Thyroid gland (tissue), 4 donors: ENCODE measurements at regions of chr16 and their contacts with region 1.

Region 1: GRCh38 chr16:87778830-87779579 is 13.2 kb upstream of the KLHDC4 start:
- DNase-seq: peak; percentile 80 to 81
- H3K4me3 ChIP-seq: no peak overlapping the region
- H3K27ac ChIP-seq: no peak overlapping the region
- H3K4me1 ChIP-seq: peaks cover 0 to 8% of the 10 kb centered on the region in 2 donors
- H3K27me3 ChIP-seq: no peaks in the 10 kb centered on the region
- CTCF ChIP-seq: peak; percentile 90 to 99 (median 97)
- POLR2A ChIP-seq: no peak

Region 2: GRCh38 chr16:87548046-87548445 is 231.0 kb before region 1 on chr16:
- intact Hi-C with region 1: loop called (anchors 5 kb)
- DNase-seq: no peak
- H3K4me3 ChIP-seq: no peak overlapping the region
- H3K27ac ChIP-seq: no peak overlapping the region
- H3K4me1 ChIP-seq: no peaks in the 10 kb centered on the region
- H3K27me3 ChIP-seq: no peaks in the 10 kb centered on the region
- CTCF ChIP-seq: no peak
- POLR2A ChIP-seq: no peak

Region 3: DNA sequence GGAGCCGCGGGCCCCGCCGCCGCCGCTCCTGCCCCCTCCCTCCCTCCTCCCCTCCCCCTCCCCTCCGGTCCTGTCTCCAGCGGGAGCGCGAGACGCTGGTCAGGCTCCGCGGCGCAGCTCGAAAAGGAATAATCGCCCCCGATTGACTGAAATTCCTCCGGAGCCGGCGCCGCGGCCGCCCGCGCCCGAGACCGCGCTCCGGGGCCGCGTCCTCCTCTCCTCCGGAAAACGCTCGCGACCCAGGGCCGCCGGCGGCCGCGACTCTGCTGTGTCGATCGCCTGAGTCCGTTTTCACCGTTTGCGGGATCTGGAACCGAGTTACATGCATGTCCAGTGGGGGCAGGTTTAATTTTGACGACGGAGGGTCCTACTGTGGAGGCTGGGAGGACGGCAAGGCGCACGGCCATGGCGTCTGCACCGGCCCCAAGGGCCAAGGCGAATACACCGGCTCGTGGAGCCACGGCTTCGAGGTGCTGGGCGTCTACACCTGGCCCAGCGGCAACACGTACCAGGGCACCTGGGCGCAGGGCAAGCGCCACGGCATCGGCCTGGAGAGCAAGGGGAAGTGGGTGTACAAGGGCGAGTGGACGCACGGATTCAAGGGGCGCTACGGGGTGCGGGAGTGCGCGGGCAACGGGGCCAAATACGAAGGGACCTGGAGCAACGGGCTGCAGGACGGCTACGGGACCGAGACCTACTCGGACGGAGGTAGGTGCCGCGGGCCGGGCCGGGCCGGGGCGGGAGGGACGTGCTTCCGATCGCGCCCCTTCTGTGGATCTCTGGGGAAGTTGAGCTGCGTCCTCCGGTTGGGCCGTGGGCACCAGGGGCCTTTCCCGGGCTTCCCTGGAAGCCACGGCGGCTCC is 176.0 kb before region 1 on chr16:
- intact Hi-C with region 1: no loop called
- DNase-seq: no peak
- H3K4me3 ChIP-seq: no peak overlapping the region
- H3K27ac ChIP-seq: no peak overlapping the region
- H3K4me1 ChIP-seq: no peaks in the 10 kb centered on the region
- H3K27me3 ChIP-seq: peaks cover 3% of the 10 kb centered on the region
- CTCF ChIP-seq: no peak
- POLR2A ChIP-seq: no peak

Region 4: GRCh38 chr16:87844120-87844733 is 65.2 kb after region 1 on chr16:
- intact Hi-C with region 1: loop called (anchors 5 kb)
- DNase-seq: no peak
- H3K4me3 ChIP-seq: no peak overlapping the region
- H3K27ac ChIP-seq: peak overlapping the region in 1 of 3 donors; percentile 10
- H3K4me1 ChIP-seq: peaks cover 20 to 31% of the 10 kb centered on the region in 2 donors
- H3K27me3 ChIP-seq: no peaks in the 10 kb centered on the region
- CTCF ChIP-seq: no peak
- POLR2A ChIP-seq: no peak

Region 5: DNA sequence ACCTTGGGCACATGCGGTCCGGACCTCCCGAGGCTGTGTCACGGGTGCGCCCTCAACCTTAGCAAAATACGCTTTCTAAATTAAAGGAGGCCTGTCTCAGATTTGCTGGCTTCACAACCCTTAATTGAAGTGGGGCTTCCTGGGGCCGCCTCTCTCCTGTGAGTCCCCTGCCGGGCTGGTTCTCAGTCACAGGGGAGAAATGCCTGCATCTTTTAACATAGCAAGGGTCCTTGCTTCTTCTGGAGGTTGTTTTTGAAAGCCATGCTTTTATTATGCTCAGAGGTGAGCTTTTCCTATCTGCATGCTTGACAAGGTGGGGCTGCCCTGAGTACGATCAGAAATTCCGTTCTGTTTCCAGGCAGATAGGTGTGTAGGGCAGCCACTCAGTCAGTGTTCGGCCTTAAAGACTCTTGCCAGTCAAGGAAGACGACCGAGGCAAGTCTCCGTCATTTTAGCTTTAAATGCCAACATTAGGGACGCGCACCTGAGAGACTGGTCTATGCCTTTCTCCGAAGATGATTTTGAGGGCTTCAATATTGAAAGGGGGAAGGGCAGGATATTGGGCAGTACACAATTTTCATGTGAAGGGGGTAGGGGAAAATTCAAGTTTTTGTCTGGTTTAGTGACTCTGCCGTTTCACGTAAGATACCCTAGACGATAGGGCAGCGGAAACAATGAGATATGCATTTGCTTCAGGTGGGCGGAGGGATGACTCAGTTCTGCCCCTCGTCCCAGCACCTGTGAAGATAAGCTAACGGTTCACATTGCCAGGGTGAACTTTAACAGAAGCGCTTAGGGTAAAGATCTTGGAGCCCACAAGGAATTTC is 95.8 kb after region 1 on chr16:
- intact Hi-C with region 1: loop called (anchors 2 kb)
- DNase-seq: no peak
- H3K4me3 ChIP-seq: no peak overlapping the region
- H3K27ac ChIP-seq: no peak overlapping the region
- H3K4me1 ChIP-seq: peaks cover 2 to 4% of the 10 kb centered on the region in 2 donors
- H3K27me3 ChIP-seq: no peaks in the 10 kb centered on the region
- CTCF ChIP-seq: no peak
- POLR2A ChIP-seq: no peak

Region 6: GRCh38 chr16:87895641-87896141 is 116.7 kb after region 1 on chr16:
- intact Hi-C with region 1: loop called (anchors 10 kb)
- DNase-seq: no peak
- H3K4me3 ChIP-seq: no peak overlapping the region
- H3K27ac ChIP-seq: no peak overlapping the region
- H3K4me1 ChIP-seq: peaks cover 0 to 5% of the 10 kb centered on the region in 2 donors
- H3K27me3 ChIP-seq: no peaks in the 10 kb centered on the region
- CTCF ChIP-seq: no peak
- POLR2A ChIP-seq: no peak

Region 7: DNA sequence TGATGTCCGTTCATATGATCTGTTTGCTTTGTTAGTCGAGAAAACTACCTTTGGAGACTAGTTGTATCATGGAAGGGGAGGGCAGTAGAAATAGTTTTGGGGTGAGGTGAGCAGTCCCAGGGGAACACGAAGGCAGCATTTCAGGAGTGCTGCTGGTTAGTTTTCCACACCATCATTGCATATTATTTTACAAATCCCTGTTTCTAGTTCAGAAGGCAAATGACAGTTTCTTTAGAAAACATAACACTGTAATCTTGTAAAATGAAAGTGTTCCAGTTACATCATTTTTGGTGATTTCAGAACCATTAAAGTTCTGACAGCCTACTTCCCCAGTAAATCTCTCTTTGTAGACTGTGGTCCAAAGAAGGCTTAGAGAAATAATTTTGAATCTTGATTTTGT is 197.7 kb after region 1 on chr16:
- intact Hi-C with region 1: no loop called
- DNase-seq: no peak
- H3K4me3 ChIP-seq: no peak overlapping the region
- H3K27ac ChIP-seq: no peak overlapping the region
- H3K4me1 ChIP-seq: no peaks in the 10 kb centered on the region
- H3K27me3 ChIP-seq: no peaks in the 10 kb centered on the region
- CTCF ChIP-seq: no peak
- POLR2A ChIP-seq: no peak